ENCODE measurements at regions of chr2 and their contacts with region 1.

Region 1: DNA sequence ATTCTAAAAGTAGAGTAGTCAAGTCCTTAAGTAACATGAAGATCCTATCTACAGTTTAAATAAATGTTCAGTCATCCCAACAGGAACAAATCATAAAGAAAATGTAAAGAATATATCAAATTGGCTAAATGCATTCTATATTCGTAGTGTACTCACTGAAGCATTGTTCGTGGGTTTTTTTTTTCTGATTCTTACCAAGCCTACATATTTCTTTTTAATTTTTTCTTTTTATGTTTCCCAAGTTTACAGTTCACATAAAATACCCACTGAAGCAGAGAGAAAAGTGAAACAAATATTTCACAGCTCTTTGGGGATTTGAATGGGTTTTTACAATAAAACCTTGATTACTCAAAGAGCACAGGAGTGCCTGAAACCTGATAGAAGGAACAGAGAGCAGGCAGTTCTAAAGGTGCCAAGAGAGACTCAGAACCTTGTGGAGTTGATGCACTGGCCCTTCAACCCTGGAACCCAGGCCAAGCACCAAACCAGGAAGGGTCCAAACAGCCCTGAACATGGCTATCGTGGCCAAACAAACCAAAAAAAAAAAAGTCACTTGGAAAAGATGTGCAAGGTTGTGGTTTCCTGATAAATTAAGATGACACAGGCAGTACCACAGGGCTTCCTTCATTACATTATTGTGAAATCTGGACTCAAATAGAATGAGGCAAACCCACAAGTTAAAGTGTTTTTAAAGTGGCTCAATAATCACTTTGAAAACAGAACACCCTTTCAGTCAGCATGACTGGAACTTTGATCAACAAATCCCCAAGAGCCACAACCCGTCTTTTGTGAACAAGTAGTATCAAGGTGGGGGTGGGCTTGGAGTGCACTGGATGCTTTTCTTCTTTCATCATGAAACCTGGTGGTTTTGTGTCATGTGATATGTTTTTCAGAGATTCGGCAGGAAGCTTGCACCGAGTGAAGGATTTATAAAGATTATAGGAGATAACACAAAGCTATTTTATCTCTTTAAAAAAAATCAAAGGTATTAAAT is 245.0 kb upstream of the FN1 start:
- DNase-seq: peak; percentile 85 to 92
- H3K4me3 ChIP-seq: no peak overlapping the region
- H3K4me3 Mint-ChIP-seq: peak overlapping the region; percentile 48
- H3K27ac Mint-ChIP-seq: peak overlapping the region; percentile 93
- H3K4me1 ChIP-seq: peaks cover 61% of the 10 kb centered on the region
- H3K4me1 Mint-ChIP-seq: peaks cover 56% of the 10 kb centered on the region
- H3K27me3 ChIP-seq: no peaks in the 10 kb centered on the region
- H3K27me3 Mint-ChIP-seq: no peaks in the 10 kb centered on the region
- CTCF ChIP-seq: no peak

Region 2: GRCh38 chr2:215269397-215270119 is 411.3 kb before region 1 on chr2:
- CTCF ChIA-PET with region 1: no interaction called
- POLR2A ChIA-PET with region 1: no interaction called
- intact Hi-C with region 1: no loop called
- DNase-seq: peak; percentile 72 to 78
- H3K4me3 ChIP-seq: no peak overlapping the region
- H3K4me3 Mint-ChIP-seq: no peak overlapping the region
- H3K27ac Mint-ChIP-seq: no peak overlapping the region
- H3K4me1 ChIP-seq: peaks cover 3% of the 10 kb centered on the region; the same call in 1 of the 2 replicates
- H3K4me1 Mint-ChIP-seq: peaks cover under 1% of the 10 kb centered on the region
- H3K27me3 ChIP-seq: no peaks in the 10 kb centered on the region
- H3K27me3 Mint-ChIP-seq: no peaks in the 10 kb centered on the region
- CTCF ChIP-seq: peak; percentile 76 to 85

Region 3: GRCh38 chr2:215311625-215312396 is 369.1 kb before region 1 on chr2 and contains the start of gene ATIC:
- CTCF ChIA-PET with region 1: no interaction called
- POLR2A ChIA-PET with region 1: no interaction called
- intact Hi-C with region 1: loop called (anchors 5 kb)
- DNase-seq: peak; percentile 97
- H3K4me3 ChIP-seq: peak within 1 kb of the TSS; percentile 57
- H3K4me3 Mint-ChIP-seq: peak within 1 kb of the TSS; percentile 87
- H3K27ac Mint-ChIP-seq: peak within 1 kb of the TSS; percentile 83
- H3K4me1 ChIP-seq: peaks cover 25% of the 10 kb centered on the region
- H3K4me1 Mint-ChIP-seq: peaks cover 23% of the 10 kb centered on the region
- H3K27me3 ChIP-seq: no peaks in the 10 kb centered on the region
- H3K27me3 Mint-ChIP-seq: no peaks in the 10 kb centered on the region
- CTCF ChIP-seq: no peak
- total RNA-seq, gene ATIC: 318 and 325 TPM in 2 replicates

Region 4: GRCh38 chr2:215454519-215455246 is 226.2 kb before region 1 on chr2:
- CTCF ChIA-PET with region 1: no interaction called
- POLR2A ChIA-PET with region 1: no interaction called
- intact Hi-C with region 1: loop called (anchors 1 kb)
- DNase-seq: peak in 1 of 2 experiments; percentile 52
- H3K4me3 ChIP-seq: no peak overlapping the region
- H3K4me3 Mint-ChIP-seq: no peak overlapping the region
- H3K27ac Mint-ChIP-seq: no peak overlapping the region
- H3K4me1 ChIP-seq: peaks cover 9% of the 10 kb centered on the region; the same call in 1 of the 2 replicates
- H3K4me1 Mint-ChIP-seq: peaks cover 7% of the 10 kb centered on the region
- H3K27me3 ChIP-seq: no peaks in the 10 kb centered on the region
- H3K27me3 Mint-ChIP-seq: no peaks in the 10 kb centered on the region
- CTCF ChIP-seq: peak; percentile 65 to 73

Region 5: GRCh38 chr2:215670396-215670795 is 10.5 kb before region 1 on chr2:
- CTCF ChIA-PET with region 1: no interaction called
- POLR2A ChIA-PET with region 1: no interaction called
- intact Hi-C with region 1: loop called (anchors 1 kb)
- DNase-seq: peak in 1 of 2 experiments; percentile 13
- H3K4me3 ChIP-seq: no peak overlapping the region
- H3K4me3 Mint-ChIP-seq: no peak overlapping the region
- H3K27ac Mint-ChIP-seq: peak overlapping the region; percentile 36
- H3K4me1 ChIP-seq: peaks cover 27% of the 10 kb centered on the region
- H3K4me1 Mint-ChIP-seq: peaks cover 48% of the 10 kb centered on the region
- H3K27me3 ChIP-seq: no peaks in the 10 kb centered on the region
- H3K27me3 Mint-ChIP-seq: no peaks in the 10 kb centered on the region
- CTCF ChIP-seq: no peak

Region 6: GRCh38 chr2:215722986-215723630 is 42.2 kb after region 1 on chr2:
- CTCF ChIA-PET with region 1: no interaction called
- POLR2A ChIA-PET with region 1: no interaction called
- intact Hi-C with region 1: loop called (anchors 1 kb)
- DNase-seq: peak in 1 of 2 experiments; percentile 52
- H3K4me3 ChIP-seq: no peak overlapping the region
- H3K4me3 Mint-ChIP-seq: no peak overlapping the region
- H3K27ac Mint-ChIP-seq: peak overlapping the region; percentile 61
- H3K4me1 ChIP-seq: peaks cover 46% of the 10 kb centered on the region
- H3K4me1 Mint-ChIP-seq: peaks cover 34% of the 10 kb centered on the region
- H3K27me3 ChIP-seq: no peaks in the 10 kb centered on the region
- H3K27me3 Mint-ChIP-seq: no peaks in the 10 kb centered on the region
- CTCF ChIP-seq: no peak

Region 7: DNA sequence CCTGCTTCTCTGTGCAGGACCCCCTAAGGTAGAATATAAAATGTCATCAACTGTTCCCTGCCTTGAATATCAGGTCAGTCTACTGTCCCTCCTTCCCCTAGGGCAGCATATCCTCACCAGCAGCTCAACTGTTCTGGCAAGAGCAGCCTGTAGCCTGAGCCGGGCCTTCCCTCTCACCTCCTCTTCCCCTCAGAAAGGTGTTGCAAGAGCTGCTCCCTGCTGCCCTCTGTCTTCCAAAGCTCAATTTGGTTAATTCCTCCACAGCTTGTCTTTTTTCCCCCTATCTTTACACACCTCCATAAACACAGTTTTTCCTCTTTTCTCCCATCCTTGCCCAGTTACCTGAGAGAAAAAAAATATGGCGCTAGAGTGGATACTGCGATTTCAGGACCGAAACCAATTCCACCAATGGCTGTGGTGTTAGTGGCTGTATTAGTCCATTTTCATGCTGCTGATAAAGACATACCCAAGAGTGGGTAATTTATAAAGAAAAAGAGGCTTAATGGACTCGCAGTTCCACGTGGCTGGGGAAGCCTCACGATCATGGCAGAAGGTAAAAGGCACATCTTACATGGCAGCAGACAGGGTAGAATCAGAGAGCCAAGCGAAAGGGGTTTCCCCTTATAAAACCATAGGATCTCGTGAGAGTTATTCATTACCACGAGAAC is 147.7 kb after region 1 on chr2:
- CTCF ChIA-PET with region 1: interaction called, 4 read pairs
- POLR2A ChIA-PET with region 1: no interaction called
- intact Hi-C with region 1: loop called (anchors 2 kb)
- DNase-seq: peak; percentile 66 to 80
- H3K4me3 ChIP-seq: no peak overlapping the region
- H3K4me3 Mint-ChIP-seq: no peak overlapping the region
- H3K27ac Mint-ChIP-seq: peak overlapping the region; percentile 79
- H3K4me1 ChIP-seq: peaks cover 80% of the 10 kb centered on the region
- H3K4me1 Mint-ChIP-seq: peaks cover 32% of the 10 kb centered on the region
- H3K27me3 ChIP-seq: no peaks in the 10 kb centered on the region
- H3K27me3 Mint-ChIP-seq: no peaks in the 10 kb centered on the region
- CTCF ChIP-seq: peak; percentile 54 to 66

Region 8: GRCh38 chr2:215920244-215921100 is 239.6 kb after region 1 on chr2:
- CTCF ChIA-PET with region 1: no interaction called
- POLR2A ChIA-PET with region 1: no interaction called
- intact Hi-C with region 1: loop called (anchors 1 kb)
- DNase-seq: peak; percentile 71 to 83
- H3K4me3 ChIP-seq: no peak overlapping the region
- H3K4me3 Mint-ChIP-seq: no peak overlapping the region
- H3K27ac Mint-ChIP-seq: peak overlapping the region; percentile 45
- H3K4me1 ChIP-seq: peaks cover 23% of the 10 kb centered on the region
- H3K4me1 Mint-ChIP-seq: peaks cover 34% of the 10 kb centered on the region
- H3K27me3 ChIP-seq: no peaks in the 10 kb centered on the region
- H3K27me3 Mint-ChIP-seq: no peaks in the 10 kb centered on the region
- CTCF ChIP-seq: peak; percentile 88 to 91

Region 9: GRCh38 chr2:216222650-216223352 is 541.9 kb after region 1 on chr2:
- CTCF ChIA-PET with region 1: no interaction called
- POLR2A ChIA-PET with region 1: no interaction called
- intact Hi-C with region 1: no loop called
- DNase-seq: no peak
- H3K4me3 ChIP-seq: no peak overlapping the region
- H3K4me3 Mint-ChIP-seq: no peak overlapping the region
- H3K27ac Mint-ChIP-seq: no peak overlapping the region
- H3K4me1 ChIP-seq: no peaks in the 10 kb centered on the region
- H3K4me1 Mint-ChIP-seq: no peaks in the 10 kb centered on the region
- H3K27me3 ChIP-seq: no peaks in the 10 kb centered on the region
- H3K27me3 Mint-ChIP-seq: no peaks in the 10 kb centered on the region
- CTCF ChIP-seq: no peak

Measured in Caco-2 (cell line).